ENCODE measurements at regions of chr1 and their contacts with region 1.

Region 1: GRCh38 chr1:109532365-109533136 is 7.1 kb upstream of the GPR61 start:
- DNase-seq: peak; percentile 79 to 96 (median 87)
- ATAC-seq: peak; percentile 94
- H3K4me3 ChIP-seq: peak overlapping the region; percentile 57
- H3K4me3 Mint-ChIP-seq: peak overlapping the region; percentile 78 to 91 (median 86)
- H3K27ac ChIP-seq: no peak overlapping the region
- H3K27ac Mint-ChIP-seq: peak overlapping the region; percentile 66 to 95 (median 86)
- H3K4me1 ChIP-seq: peaks cover 11 to 28% of the 10 kb centered on the region in 2 donors
- H3K4me1 Mint-ChIP-seq: peaks cover 22 to 40% (median 30%) of the 10 kb centered on the region in 7 donors
- H3K27me3 ChIP-seq: no peaks in the 10 kb centered on the region
- H3K27me3 Mint-ChIP-seq: no peaks in the 10 kb centered on the region

Region 2: DNA sequence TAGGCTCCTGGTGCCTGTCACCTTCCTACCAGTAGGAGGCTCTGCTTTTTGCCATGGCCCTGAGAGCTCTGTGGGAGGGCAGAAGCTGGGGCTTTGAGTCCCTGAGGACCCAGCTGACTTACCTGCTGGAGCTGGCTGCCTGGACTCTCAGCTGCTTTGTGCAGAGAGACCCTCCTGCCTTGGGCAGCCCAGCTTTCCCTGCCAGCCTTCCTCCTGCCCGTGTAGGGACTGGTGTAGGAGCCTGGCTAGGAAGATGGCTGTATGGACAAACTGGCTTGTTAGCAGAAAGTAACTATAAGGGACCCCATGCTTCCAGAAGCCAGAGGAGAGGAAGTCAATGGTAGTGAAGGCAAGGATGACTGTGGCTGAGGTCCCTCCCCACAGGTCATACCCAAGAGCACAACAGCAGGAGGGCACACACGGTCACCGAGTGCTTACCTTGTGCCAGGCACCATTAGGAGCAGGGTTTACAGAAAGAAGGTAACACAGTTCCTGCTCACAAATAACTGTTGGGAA is 292.9 kb before region 1 on chr1:
- CTCF ChIA-PET with region 1: no interaction called
- POLR2A ChIA-PET with region 1: no interaction called
- intact Hi-C with region 1: loop called in 1 of 2 experiments (anchors 1 kb)
- DNase-seq: peak in 3 of 9 donors; percentile 17 to 32 (median 23)
- ATAC-seq: peak; percentile 76
- H3K4me3 ChIP-seq: no peak overlapping the region
- H3K4me3 Mint-ChIP-seq: no peak overlapping the region
- H3K27ac ChIP-seq: no peak overlapping the region
- H3K27ac Mint-ChIP-seq: peak overlapping the region in 7 of 9 donors; percentile 29 to 82 (median 69)
- H3K4me1 ChIP-seq: peaks cover 5 to 12% of the 10 kb centered on the region in 2 donors
- H3K4me1 Mint-ChIP-seq: peaks cover 16 to 32% (median 22%) of the 10 kb centered on the region in 7 donors
- H3K27me3 ChIP-seq: no peaks in the 10 kb centered on the region
- H3K27me3 Mint-ChIP-seq: peaks cover 0 to 15% (median 7%) of the 10 kb centered on the region in 5 donors

Region 3: DNA sequence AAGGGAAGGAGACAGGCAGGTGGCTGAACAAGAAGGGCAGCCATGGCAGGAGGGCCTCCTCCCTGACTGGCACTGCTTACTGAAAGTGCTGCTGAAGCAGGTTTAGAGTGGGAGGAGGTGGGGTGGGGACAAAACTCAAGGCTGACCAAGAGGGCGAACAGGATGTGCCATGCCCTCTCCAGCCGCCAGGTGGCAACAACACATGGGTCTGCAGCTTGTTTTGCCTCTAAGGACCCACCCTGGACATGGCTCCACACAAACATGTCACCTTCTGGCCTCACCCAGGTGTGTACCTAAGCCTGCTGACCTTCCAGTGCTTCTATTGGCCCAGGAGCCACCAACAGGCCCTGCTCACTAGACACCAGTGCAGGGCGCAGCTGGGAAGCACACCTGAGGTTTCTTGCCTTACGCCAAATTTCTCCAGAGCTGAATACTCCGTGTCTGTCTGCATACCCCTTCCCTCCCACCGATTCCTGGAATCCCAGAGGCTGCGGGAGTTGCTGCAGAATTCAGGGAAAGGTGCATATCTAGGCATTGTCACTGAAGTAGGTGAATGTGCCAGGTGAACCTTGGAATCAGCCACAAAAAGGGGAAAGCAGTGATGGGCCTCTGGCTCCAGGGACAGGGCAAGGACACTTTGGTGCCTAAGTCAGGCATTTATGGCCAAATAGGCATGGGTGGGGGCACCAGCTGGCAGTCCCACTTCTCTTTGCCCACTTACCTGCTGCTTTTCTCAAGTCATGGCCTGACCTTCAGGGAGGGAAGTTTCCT is 254.9 kb before region 1 on chr1:
- CTCF ChIA-PET with region 1: interaction called, 33 read pairs
- POLR2A ChIA-PET with region 1: interaction called, 5 read pairs
- intact Hi-C with region 1: loop called (anchors 1 kb)
- DNase-seq: peak in 7 of 9 donors; percentile 20 to 72 (median 35)
- ATAC-seq: peak; percentile 77
- H3K4me3 ChIP-seq: no peak overlapping the region
- H3K4me3 Mint-ChIP-seq: no peak overlapping the region
- H3K27ac ChIP-seq: no peak overlapping the region
- H3K27ac Mint-ChIP-seq: peak overlapping the region in 1 of 9 donors; percentile 44
- H3K4me1 ChIP-seq: peaks cover 3% of the 10 kb centered on the region in 2 donors
- H3K4me1 Mint-ChIP-seq: peaks cover 0 to 26% (median 10%) of the 10 kb centered on the region in 7 donors
- H3K27me3 ChIP-seq: no peaks in the 10 kb centered on the region
- H3K27me3 Mint-ChIP-seq: no peaks in the 10 kb centered on the region

Region 4: DNA sequence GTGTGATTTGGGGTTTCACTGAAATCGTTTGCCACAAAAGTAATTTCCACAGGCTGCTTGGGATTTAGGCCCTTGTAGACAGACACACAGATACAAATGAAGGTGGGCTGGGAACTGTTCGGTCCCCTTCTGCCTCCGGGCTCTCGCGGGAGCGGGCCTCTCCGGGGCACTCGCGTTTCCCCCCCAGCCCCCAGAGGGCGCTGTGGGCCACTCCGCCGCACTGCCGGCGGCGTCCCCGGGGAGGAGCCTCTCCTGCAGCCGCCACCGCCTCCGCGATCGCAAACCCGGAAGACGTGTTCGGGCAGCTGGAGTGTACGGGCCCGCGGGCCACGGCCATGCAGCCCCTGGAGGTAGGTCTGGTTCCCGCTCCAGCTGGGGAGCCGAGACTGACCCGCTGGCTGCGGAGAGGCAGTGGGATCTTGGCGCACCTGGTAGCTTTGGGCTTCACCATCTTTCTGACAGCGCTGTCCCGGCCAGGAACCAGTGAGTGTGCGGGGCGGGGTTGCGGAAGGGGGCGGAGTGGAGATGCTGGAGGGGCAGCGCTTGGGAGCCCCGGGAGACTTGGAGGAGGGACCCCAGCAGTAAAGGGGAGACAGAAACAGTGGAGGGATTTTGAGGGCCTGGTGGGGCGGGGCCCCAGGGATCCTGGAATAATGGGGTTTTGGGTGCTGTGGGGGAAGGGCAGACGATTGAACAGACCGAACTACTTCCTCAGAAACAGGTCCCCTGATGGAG is 38.6 kb before region 1 on chr1 and contains the start of gene CYB561D1:
- CTCF ChIA-PET with region 1: interaction called, 1,240 read pairs
- POLR2A ChIA-PET with region 1: interaction called, 520 read pairs
- intact Hi-C with region 1: loop called (anchors 1 kb)
- DNase-seq: peak; percentile 83 to 97 (median 91)
- ATAC-seq: peak; percentile 96
- H3K4me3 ChIP-seq: peak within 1 kb of the TSS; percentile 96
- H3K4me3 Mint-ChIP-seq: peak within 1 kb of the TSS; percentile 90 to 98 (median 94)
- H3K27ac ChIP-seq: peak within 1 kb of the TSS; percentile 72
- H3K27ac Mint-ChIP-seq: peak within 1 kb of the TSS; percentile 84 to 98 (median 92)
- H3K4me1 ChIP-seq: peaks cover 31 to 59% of the 10 kb centered on the region in 2 donors
- H3K4me1 Mint-ChIP-seq: peaks cover 40 to 59% (median 53%) of the 10 kb centered on the region in 7 donors
- H3K27me3 ChIP-seq: no peaks in the 10 kb centered on the region
- H3K27me3 Mint-ChIP-seq: no peaks in the 10 kb centered on the region
- total RNA-seq, gene CYB561D1: 19.6 to 41.5 (median 24.1) TPM

Region 5: DNA sequence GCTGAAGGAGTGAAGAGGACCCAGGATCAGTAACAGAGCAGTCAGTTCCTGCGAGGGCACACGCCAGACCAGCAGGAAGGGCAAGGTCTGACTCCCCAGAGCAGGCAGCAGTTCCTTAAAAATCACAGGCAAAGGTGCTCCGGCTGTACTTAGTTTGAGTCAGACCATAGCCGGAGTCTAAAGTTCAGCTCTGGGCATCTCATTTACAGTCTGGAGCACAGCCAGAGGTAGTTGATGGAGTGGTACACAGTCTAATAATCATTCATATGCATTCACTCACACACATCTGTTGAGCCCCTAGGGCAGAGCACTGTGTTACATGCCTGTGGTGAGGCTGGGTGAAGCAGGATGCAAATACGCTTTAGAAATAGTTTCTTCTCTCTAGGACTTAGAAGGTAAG is 15.7 kb before region 1 on chr1:
- CTCF ChIA-PET with region 1: interaction called, 1,240 read pairs
- POLR2A ChIA-PET with region 1: interaction called, 520 read pairs
- intact Hi-C with region 1: no loop called
- DNase-seq: no peak
- ATAC-seq: no peak
- H3K4me3 ChIP-seq: no peak overlapping the region
- H3K4me3 Mint-ChIP-seq: no peak overlapping the region
- H3K27ac ChIP-seq: no peak overlapping the region
- H3K27ac Mint-ChIP-seq: no peak overlapping the region
- H3K4me1 ChIP-seq: peaks cover 0 to under 1% of the 10 kb centered on the region in 2 donors
- H3K4me1 Mint-ChIP-seq: peaks cover 0 to 13% (median 6%) of the 10 kb centered on the region in 7 donors
- H3K27me3 ChIP-seq: no peaks in the 10 kb centered on the region
- H3K27me3 Mint-ChIP-seq: peaks cover 0 to 30% (median 0%) of the 10 kb centered on the region in 5 donors

Measured in naive thymus-derived CD4-positive, alpha-beta T cell (primary cell).